AG04449 (cell line): ENCODE measurements at regions of chr19 and their contacts with region 1.

Region 1: DNA sequence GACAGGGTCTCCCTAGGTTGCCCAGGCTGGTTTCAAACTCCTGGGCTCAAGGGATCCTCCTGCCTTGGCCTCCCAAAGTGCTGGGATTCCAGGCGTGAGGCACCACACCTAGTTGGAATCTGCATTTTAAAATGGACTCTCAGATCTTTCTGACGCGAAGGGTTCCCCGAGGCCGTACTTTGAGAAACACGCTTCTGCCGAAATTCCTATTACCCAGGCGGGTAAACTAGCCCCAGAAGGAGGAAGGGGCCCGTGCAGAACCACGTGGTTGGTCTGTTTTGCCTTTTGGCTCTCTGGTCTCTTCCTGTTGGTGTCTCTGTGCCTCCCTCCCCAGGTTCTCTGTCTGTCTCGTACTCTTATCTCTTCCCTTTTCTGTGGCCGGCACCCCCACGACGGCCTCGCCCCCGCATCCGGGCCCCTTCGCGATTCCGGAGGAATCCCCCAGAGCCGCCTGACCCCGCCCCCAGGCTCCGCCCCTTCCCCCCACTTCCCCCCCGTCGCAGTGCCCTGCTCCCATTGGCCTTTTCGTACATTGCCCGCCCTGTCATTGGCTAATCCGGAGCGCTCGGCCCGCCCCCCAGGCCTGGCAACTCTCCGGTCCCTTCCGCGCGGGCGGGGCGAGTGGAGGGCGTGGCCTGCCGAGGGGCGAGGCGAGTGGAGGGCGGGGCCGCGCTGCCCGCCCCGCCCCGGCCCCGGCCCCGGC is at the start of gene TNFAIP8L1:
- DNase-seq: peak; percentile 56
- H3K4me3 ChIP-seq: peak within 1 kb of the TSS; percentile 78
- CTCF ChIP-seq: no peak

Region 2: DNA sequence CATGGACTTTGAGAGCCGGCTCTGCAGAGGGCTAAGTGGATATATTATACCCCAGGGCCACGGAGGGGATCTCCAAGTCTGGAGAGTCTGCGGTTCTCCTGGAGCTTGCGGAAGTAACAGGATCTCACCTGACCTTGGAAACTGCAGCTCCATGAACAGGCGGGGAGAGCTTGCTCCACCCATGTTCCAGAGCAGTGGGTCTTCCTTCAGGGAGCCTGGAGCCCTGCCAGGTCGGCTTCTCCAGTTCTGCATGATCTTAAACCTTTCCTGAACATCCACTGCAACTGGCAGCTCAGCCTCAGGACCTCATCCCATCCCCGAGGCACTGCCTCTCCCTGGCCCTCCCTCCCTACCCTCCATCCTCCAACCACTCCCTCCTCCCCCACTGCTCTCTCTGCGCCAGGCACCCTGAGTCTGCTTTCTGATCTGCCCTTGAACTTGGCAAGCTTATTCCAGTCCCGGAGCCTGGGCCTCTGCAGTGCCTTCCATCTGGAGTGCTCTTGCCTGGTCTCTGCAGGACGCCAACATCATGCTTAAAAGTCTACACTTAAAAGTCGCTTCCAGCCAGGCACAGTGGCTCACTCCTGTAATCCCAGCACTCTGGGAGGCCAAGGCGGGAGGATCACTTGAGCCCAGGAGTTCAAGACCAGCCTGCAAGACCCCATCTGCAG is 745.3 kb before region 1 on chr19:
- CTCF ChIA-PET with region 1: no interaction called
- POLR2A ChIA-PET with region 1: no interaction called
- DNase-seq: no peak
- H3K4me3 ChIP-seq: no peak overlapping the region
- CTCF ChIP-seq: no peak

Region 3: GRCh38 chr19:4524808-4525562 is 114.0 kb before region 1 on chr19:
- CTCF ChIA-PET with region 1: interaction called, 36 read pairs
- POLR2A ChIA-PET with region 1: no interaction called
- DNase-seq: no peak
- H3K4me3 ChIP-seq: no peak overlapping the region
- CTCF ChIP-seq: peak; percentile 83

Region 4: GRCh38 chr19:4557971-4558941 is 80.7 kb before region 1 on chr19:
- CTCF ChIA-PET with region 1: interaction called, 43 read pairs
- POLR2A ChIA-PET with region 1: no interaction called
- DNase-seq: no peak
- H3K4me3 ChIP-seq: no peak overlapping the region
- CTCF ChIP-seq: peak; percentile 94

Region 5: GRCh38 chr19:4576016-4576933 is 62.7 kb before region 1 on chr19:
- CTCF ChIA-PET with region 1: interaction called, 143 read pairs
- POLR2A ChIA-PET with region 1: no interaction called
- DNase-seq: no peak
- H3K4me3 ChIP-seq: no peak overlapping the region
- CTCF ChIP-seq: peak; percentile 79

Region 6: GRCh38 chr19:4589579-4590410 is 49.2 kb before region 1 on chr19:
- CTCF ChIA-PET with region 1: interaction called, 19 read pairs
- POLR2A ChIA-PET with region 1: no interaction called
- DNase-seq: no peak
- H3K4me3 ChIP-seq: no peak overlapping the region
- CTCF ChIP-seq: peak; percentile 60

Region 7: GRCh38 chr19:4606921-4607678 is 31.9 kb before region 1 on chr19:
- CTCF ChIA-PET with region 1: interaction called, 17 read pairs
- POLR2A ChIA-PET with region 1: no interaction called
- DNase-seq: no peak
- H3K4me3 ChIP-seq: no peak overlapping the region
- CTCF ChIP-seq: no peak

Region 8: GRCh38 chr19:4654437-4655361 is 15.7 kb after region 1 on chr19:
- CTCF ChIA-PET with region 1: interaction called, 10 read pairs
- POLR2A ChIA-PET with region 1: no interaction called
- DNase-seq: no peak
- H3K4me3 ChIP-seq: no peak overlapping the region
- CTCF ChIP-seq: no peak

Region 9: DNA sequence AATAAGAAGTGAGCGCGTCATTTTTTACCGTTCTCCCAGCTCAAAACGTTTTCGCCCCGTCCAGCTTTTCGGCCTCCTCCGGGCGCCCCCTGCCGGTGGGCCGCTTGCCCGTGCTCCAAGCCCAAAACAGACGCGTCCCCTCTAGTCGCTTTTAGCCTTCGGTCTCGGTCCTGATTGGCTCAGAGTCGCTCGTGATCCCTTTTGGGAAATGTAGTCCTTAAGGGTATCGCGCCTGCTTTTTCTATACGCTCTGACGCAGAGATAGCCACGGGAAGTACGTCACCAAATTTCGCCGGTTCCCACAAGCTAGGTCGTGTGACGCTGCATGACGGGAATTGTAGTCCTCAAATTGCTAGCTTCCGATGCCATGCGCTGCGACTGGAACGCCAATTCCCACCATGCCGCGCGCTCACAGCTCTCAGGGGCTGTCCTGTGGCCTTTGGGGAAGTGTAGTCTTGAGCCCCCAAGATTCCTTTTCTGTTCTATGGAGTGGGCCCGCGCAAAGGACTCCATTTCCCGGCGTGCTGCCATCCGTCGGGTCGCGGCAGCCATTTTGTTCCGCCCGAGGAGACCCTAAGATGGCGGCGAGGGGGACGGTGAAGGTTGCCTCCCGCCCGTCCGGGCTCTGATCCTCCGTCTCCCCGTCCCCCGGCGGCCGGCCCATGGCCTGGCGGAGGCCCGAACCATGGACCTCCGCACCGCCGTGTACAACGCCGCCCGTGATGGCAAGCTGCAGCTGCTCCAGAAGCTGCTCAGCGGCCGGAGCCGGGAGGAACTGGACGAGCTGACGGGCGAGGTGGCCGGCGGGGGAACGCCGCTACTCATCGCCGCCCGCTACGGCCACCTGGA is 152.4 kb after region 1 on chr19 and contains the start of gene FEM1A:
- CTCF ChIA-PET with region 1: no interaction called
- POLR2A ChIA-PET with region 1: no interaction called
- DNase-seq: peak; percentile 100
- H3K4me3 ChIP-seq: peak within 1 kb of the TSS; percentile 76
- CTCF ChIP-seq: peak; percentile 97